Spleen (tissue), 13 donors: ENCODE measurements at regions of chr3 and their contacts with region 1.

Region 1: GRCh38 chr3:184250167-184250828 is 826 bp downstream of the EEF1AKMT4 start:
- DNase-seq: peak; percentile 93
- H3K4me3 ChIP-seq: peak overlapping the region; percentile 79 to 100 (median 96)
- H3K27ac ChIP-seq: peak overlapping the region in 7 of 8 donors; percentile 0 to 93 (median 87)
- H3K4me1 ChIP-seq: peaks cover 4 to 44% (median 26%) of the 10 kb centered on the region in 6 donors
- H3K27me3 ChIP-seq: no peaks in the 10 kb centered on the region
- CTCF ChIP-seq: peak; percentile 68 to 98 (median 91)
- POLR2A ChIP-seq: no peak

Region 2: DNA sequence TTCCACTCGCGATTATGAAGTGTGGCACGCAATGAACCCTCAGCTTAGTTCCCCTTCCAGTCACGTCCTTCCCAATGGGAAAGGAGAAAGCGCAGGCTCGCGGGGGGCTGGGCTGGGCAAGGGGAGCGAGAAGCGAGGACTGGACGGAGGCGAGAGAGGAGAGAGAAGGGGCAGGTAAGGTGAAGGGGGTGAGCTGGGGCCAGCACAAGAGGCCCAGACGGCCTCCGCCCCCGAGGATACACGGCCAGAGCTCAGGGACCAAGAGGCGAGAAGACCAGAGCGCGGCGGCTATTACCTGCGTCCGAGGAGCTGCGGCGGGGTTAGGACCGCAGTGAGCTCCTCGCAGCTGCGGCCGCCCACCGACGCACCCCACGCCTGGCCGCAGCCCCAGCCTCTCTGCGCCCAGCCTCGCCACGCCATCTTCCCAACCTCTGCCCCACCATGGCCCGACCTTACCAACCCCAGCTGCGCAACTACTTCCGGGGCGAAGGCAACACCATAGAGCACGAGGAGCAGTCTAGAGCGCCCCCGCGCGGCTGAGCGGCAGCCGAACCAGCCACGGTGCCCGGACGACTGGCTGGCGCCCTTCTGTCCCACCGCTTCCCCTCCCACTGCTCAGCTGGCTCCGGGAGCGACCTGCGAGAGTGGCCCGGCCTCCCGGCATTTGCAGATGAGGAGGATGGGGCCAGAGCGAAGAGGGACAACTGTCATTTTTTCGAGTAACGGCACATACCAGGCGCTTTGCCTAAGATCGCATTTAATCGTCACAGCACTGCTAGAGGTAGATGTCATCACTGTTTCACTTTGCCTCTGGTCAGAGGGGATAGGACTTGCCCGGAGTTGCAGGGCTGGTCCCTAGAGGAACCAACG is 365.6 kb before region 1 on chr3 and contains the start of gene PARL:
- intact Hi-C with region 1: loop called (anchors 10 kb)
- DNase-seq: peak; percentile 100
- H3K4me3 ChIP-seq: peak within 1 kb of the TSS; percentile 62 to 98 (median 90)
- H3K27ac ChIP-seq: peak within 1 kb of the TSS; percentile 59 to 92 (median 83)
- H3K4me1 ChIP-seq: peaks cover 20 to 55% (median 36%) of the 10 kb centered on the region in 6 donors
- H3K27me3 ChIP-seq: no peaks in the 10 kb centered on the region
- CTCF ChIP-seq: peak; percentile 94 to 100 (median 98)
- POLR2A ChIP-seq: no peak
- total RNA-seq, gene PARL: 34.5 to 70.3 (median 50.6) TPM

Region 3: DNA sequence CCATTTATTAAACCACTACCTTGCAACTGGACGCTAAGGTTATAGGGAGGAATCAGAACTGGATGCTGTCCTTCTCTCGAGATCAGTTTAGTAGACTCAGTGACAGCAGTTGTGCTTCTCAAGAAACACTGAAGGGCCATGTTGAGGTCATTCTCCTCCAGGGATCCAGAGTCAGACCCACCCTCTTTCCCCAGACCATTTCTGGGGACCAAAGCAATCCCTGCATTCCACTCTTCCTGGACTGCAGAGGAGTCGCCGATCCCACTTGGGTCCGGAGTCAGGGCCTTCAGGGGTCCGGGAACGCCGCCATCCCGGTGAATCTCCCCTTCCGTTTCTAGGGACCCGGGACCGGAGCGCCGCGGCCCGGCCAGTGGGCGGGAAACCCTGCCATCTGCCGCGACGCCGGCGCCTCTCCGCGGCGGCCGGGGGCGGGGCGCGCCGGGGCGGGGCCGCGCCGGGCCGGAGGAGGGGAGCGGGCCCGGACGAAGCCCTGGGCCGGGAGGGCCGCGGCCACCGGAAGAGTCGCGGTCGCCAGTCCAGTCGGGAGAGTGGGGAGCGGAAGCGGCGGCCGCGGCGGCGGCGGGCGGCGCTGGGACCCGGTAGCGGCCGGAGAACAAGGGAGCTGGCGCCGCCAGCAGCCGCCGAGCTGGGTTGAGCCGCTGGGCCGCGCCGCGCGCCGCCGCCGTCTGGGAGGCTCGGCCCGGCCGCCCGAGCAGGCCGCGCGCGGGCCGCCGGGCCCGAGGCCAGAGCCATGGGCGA is 95.2 kb before region 1 on chr3 and contains the start of gene DVL3:
- intact Hi-C with region 1: loop called (anchors 10 kb)
- DNase-seq: peak; percentile 93
- H3K4me3 ChIP-seq: peak within 1 kb of the TSS; percentile 44 to 94 (median 78)
- H3K27ac ChIP-seq: peak within 1 kb of the TSS; percentile 28 to 90 (median 85)
- H3K4me1 ChIP-seq: peaks cover 19 to 55% (median 50%) of the 10 kb centered on the region in 6 donors
- H3K27me3 ChIP-seq: no peaks in the 10 kb centered on the region
- CTCF ChIP-seq: no peak
- POLR2A ChIP-seq: no peak
- total RNA-seq, gene DVL3: 40.3 to 67.3 (median 54.2) TPM

Region 4: DNA sequence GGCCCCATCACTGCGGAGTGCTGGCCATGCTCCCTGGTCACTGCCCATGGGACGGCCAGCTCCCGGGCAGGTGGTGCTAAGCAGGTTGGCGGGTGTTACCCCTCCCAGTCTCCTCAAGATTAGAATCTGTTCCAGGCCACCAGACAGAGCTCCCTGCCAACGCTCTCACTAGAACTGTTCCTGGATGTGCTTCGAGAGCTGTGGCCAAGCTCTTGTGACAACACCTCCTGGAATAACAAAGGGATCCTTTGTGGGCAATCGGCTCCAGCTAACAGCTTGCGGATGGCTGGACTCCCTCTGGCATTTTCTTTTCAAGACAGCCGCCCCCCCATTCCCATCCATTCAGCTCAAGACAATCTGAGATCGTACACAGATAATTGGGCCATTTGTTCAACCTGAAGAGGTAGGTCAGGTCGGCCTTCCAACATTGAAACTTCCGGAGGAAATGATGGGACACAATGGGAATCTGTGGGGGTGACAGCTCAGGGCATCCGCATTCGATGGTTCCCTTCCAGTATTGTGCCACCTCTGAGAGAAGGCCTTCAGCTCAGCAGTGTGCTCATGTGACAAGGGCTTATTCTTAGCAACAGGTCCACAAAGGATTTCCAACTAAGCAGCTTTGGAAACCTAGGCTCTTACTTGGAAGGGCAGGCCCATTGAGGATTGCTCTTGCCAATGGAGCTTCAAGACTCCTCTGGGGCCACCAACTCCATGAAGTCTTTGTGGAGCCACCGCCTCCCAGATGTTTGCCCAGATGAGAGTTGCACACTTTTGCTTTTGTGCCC is 299.7 kb after region 1 on chr3:
- intact Hi-C with region 1: no loop called
- DNase-seq: peak; percentile 45
- H3K4me3 ChIP-seq: no peak overlapping the region
- H3K27ac ChIP-seq: no peak overlapping the region
- H3K4me1 ChIP-seq: peaks cover 0 to 16% (median 8%) of the 10 kb centered on the region in 6 donors
- H3K27me3 ChIP-seq: peaks cover 0 to 40% (median 0%) of the 10 kb centered on the region in 7 donors
- CTCF ChIP-seq: no peak
- POLR2A ChIP-seq: no peak